Dendritic cell treated with granulocyte-macrophage colony-stimulating factor and Interleukin-4, amounts not matched to agents 40 ng/mL and 50 ng/mL, for 4 days (primary cell): ENCODE measurements at regions of chr9 and their contacts with region 1.

Region 1: GRCh38 chr9:33851301-33851700 is 34.3 kb downstream of the UBE2R2 start:
- H3K4me3 Mint-ChIP-seq: no peak overlapping the region
- H3K27ac Mint-ChIP-seq: no peak overlapping the region
- H3K4me1 Mint-ChIP-seq: peaks cover 34% of the 10 kb centered on the region
- H3K27me3 Mint-ChIP-seq: no peaks in the 10 kb centered on the region

Region 2: GRCh38 chr9:33364127-33364526 is 487.2 kb before region 1 on chr9:
- intact Hi-C with region 1: no loop called
- H3K4me3 Mint-ChIP-seq: no peak overlapping the region
- H3K27ac Mint-ChIP-seq: no peak overlapping the region
- H3K4me1 Mint-ChIP-seq: no peaks in the 10 kb centered on the region
- H3K27me3 Mint-ChIP-seq: no peaks in the 10 kb centered on the region

Region 3: GRCh38 chr9:33813712-33814641 is 37.3 kb before region 1 on chr9:
- intact Hi-C with region 1: loop called (anchors 2 kb)
- H3K4me3 Mint-ChIP-seq: no peak overlapping the region
- H3K27ac Mint-ChIP-seq: peak overlapping the region; percentile 99
- H3K4me1 Mint-ChIP-seq: peaks cover 36% of the 10 kb centered on the region
- H3K27me3 Mint-ChIP-seq: no peaks in the 10 kb centered on the region